AG04449 (cell line): ENCODE measurements at regions of chr4 and their contacts with region 1.

Region 1: GRCh38 chr4:38030023-38030422 is 69.8 kb downstream of the PTTG2 start:
- DNase-seq: no peak
- H3K4me3 ChIP-seq: no peak overlapping the region
- CTCF ChIP-seq: no peak

Region 2: DNA sequence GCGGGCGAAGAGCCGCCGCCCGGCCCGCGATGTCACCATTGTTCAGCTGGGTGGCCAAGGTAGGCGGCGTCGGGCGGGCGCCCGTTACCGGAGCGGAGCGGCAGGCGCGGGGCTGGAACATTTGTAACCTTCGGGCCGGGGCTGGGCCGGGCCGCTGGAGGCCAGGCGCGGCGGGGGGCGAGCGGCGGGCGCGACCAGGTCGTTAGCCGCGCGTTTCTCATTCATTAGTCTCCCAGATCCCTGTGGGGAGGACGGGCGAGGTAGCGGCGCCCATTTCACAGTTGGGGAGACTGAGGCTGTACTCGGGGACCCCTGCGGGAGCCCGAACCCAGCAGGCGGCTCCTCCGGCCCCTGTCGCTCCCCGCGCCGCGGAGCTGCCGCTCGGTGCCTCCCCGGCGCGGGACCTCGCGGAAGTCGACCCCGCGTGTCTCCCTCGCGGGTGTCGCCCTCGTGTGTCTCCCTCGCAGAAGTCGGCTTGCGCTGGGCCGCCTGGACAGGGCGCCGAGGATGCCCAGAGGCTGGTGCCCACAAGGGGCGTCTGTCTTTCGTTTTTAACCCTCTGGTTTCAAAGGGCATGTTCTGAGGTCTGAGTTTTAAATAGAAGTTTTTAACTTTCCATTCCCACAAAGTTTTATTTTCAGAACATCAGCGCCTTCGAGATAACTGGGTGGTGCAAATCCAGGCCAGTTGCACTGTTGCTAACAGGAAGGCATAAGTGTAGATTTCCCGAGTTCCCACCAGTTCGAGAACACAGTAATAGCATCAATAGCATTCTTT is 52.4 kb before region 1 on chr4:
- CTCF ChIA-PET with region 1: interaction called, 10 read pairs
- POLR2A ChIA-PET with region 1: no interaction called
- DNase-seq: no peak
- H3K4me3 ChIP-seq: peak overlapping the region; percentile 66
- CTCF ChIP-seq: peak; percentile 83